ENCODE measurements at regions of chrX and their contacts with region 1.

Region 1: GRCh38 chrX:39121903-39122302 is 320.6 kb downstream of the MID1IP1 start:
- DNase-seq: no peak
- H3K4me3 ChIP-seq: no peak overlapping the region
- H3K27ac ChIP-seq: no peak overlapping the region
- H3K4me1 ChIP-seq: no peaks in the 10 kb centered on the region
- H3K27me3 ChIP-seq: no peaks in the 10 kb centered on the region
- CTCF ChIP-seq: no peak

Region 2: DNA sequence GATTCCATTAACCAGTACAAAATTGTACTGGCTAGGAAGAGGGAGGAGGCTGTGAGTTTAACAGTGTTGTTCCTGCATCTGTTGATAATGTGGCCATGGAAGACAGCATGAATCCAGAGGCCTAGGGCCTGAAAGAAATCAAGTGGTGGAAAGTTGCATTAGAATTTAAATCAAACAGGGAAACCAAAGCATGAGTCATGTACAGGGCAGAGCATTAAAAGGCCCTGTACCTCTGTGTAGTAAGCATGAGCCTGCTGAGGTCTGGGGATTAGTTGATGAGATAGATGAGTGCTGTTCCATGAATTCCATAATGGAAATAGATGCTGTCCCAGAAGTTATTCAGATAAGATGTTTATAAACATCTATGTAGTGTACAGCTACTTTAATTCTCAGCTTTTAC is 262.3 kb before region 1 on chrX:
- intact Hi-C with region 1: no loop called
- DNase-seq: no peak
- H3K4me3 ChIP-seq: no peak overlapping the region
- H3K27ac ChIP-seq: no peak overlapping the region
- H3K4me1 ChIP-seq: peaks cover 0 to 14% (median 3%) of the 10 kb centered on the region in 4 donors
- H3K27me3 ChIP-seq: no peaks in the 10 kb centered on the region
- CTCF ChIP-seq: no peak

Region 3: GRCh38 chrX:39050427-39050826 is 71.5 kb before region 1 on chrX:
- intact Hi-C with region 1: no loop called
- DNase-seq: no peak
- H3K4me3 ChIP-seq: no peak overlapping the region
- H3K27ac ChIP-seq: no peak overlapping the region
- H3K4me1 ChIP-seq: no peaks in the 10 kb centered on the region
- H3K27me3 ChIP-seq: no peaks in the 10 kb centered on the region
- CTCF ChIP-seq: no peak

Region 4: GRCh38 chrX:39096599-39096998 is 25.3 kb before region 1 on chrX:
- intact Hi-C with region 1: loop called (anchors 1 kb)
- DNase-seq: no peak
- H3K4me3 ChIP-seq: no peak overlapping the region
- H3K27ac ChIP-seq: no peak overlapping the region
- H3K4me1 ChIP-seq: no peaks in the 10 kb centered on the region
- H3K27me3 ChIP-seq: no peaks in the 10 kb centered on the region
- CTCF ChIP-seq: no peak

Measured in tibial artery (tissue), 4 donors.